ENCODE measurements at regions of chr5 and their contacts with region 1.

Region 1: GRCh38 chr5:7745882-7746610 is 104.9 kb downstream of the CFAP90 start:
- DNase-seq: peak; percentile 73
- H3K4me3 ChIP-seq: no peak overlapping the region
- H3K27ac ChIP-seq: no peak overlapping the region
- H3K4me1 ChIP-seq: no peaks in the 10 kb centered on the region
- H3K27me3 ChIP-seq: no peaks in the 10 kb centered on the region
- CTCF ChIP-seq: peak; percentile 93

Region 2: DNA sequence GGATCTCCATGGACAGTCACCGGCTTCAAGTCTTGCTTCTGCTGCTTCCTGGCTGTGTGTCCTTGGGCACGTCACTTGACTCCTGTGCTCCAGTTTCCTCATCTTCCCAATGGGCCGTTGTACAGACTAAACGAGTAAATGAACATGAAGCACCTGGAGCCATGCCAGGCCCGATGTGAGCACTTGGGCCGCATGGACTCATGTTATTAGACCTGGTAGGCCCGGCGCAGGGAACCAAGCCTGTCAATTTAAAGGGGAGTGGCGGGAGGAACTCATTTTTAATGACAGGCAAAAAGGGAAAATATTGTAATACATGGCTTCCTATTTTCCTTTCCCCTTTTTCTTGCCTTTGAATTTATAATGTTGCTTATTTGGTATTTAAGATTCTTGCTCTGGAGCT is 985.4 kb before region 1 on chr5:
- intact Hi-C with region 1: loop called (anchors 5 kb)
- DNase-seq: no peak
- H3K4me3 ChIP-seq: no peak overlapping the region
- H3K27ac ChIP-seq: no peak overlapping the region
- H3K4me1 ChIP-seq: peaks cover 3% of the 10 kb centered on the region
- H3K27me3 ChIP-seq: no peaks in the 10 kb centered on the region
- CTCF ChIP-seq: no peak

Region 3: GRCh38 chr5:7261049-7261448 is 485.0 kb before region 1 on chr5:
- intact Hi-C with region 1: loop called (anchors 5 kb)
- DNase-seq: peak; percentile 27
- H3K4me3 ChIP-seq: no peak overlapping the region
- H3K27ac ChIP-seq: no peak overlapping the region
- H3K4me1 ChIP-seq: no peaks in the 10 kb centered on the region
- H3K27me3 ChIP-seq: no peaks in the 10 kb centered on the region
- CTCF ChIP-seq: peak; percentile 56

Region 4: DNA sequence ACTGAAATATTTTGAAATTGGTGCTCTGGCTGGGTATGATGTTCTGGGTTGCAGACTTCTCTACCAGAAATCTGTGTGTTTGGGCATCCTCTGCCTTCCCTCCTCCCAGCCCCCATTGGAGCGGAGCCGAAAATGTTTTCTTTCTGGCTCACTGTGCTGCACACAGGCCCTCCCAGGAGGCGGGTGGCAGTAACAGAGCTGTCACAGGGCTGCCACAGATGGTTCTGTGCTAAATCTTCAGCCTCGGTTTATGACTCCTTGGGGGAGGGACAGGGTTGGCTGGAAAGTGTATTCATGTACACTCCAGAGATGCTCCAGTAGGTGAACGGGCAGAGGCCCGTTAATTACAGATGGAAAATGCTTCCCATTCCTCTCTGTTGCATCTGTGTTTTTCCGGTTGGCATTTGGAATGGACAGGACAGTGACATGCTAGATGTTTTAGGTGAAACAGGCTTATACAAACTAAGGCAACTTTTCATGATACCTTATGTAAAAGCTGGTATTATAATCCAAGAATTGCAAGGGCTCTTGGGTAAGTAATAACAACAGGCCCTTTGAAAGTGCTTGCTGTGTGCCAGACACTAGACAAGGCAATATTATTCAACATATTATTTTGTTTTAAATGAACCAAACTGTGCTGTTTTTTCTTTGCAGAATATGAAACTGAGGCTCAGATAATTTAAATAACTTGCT is 169.9 kb before region 1 on chr5:
- intact Hi-C with region 1: no loop called
- DNase-seq: no peak
- H3K4me3 ChIP-seq: no peak overlapping the region
- H3K27ac ChIP-seq: no peak overlapping the region
- H3K4me1 ChIP-seq: no peaks in the 10 kb centered on the region
- H3K27me3 ChIP-seq: no peaks in the 10 kb centered on the region
- CTCF ChIP-seq: no peak

Measured in colonic mucosa (tissue), 4 donors.